Mammary epithelial cell (primary cell): ENCODE measurements at regions of chr12 and their contacts with region 1.

Region 1: GRCh38 chr12:47742253-47742825 is 16.3 kb downstream of the RAPGEF3 start:
- DNase-seq: no peak
- H3K4me3 ChIP-seq: no peak overlapping the region
- H3K27ac ChIP-seq: no peak overlapping the region
- H3K4me1 ChIP-seq: peaks cover 21% of the 10 kb centered on the region
- H3K27me3 ChIP-seq: no peaks in the 10 kb centered on the region
- CTCF ChIP-seq: peak; percentile 98 to 99

Region 2: GRCh38 chr12:47715393-47715876 is 26.9 kb before region 1 on chr12:
- CTCF ChIA-PET with region 1: no interaction called
- dilution Hi-C with region 1: no loop called
- in situ Hi-C with region 1: no loop called
- intact Hi-C with region 1: loop called (anchors 2 kb)
- DNase-seq: peak; percentile 77
- H3K4me3 ChIP-seq: peak overlapping the region in 1 of 3 experiments; percentile 9
- H3K27ac ChIP-seq: no peak overlapping the region
- H3K4me1 ChIP-seq: peaks cover 7% of the 10 kb centered on the region
- H3K27me3 ChIP-seq: no peaks in the 10 kb centered on the region
- CTCF ChIP-seq: peak; percentile 79 to 80

Region 3: DNA sequence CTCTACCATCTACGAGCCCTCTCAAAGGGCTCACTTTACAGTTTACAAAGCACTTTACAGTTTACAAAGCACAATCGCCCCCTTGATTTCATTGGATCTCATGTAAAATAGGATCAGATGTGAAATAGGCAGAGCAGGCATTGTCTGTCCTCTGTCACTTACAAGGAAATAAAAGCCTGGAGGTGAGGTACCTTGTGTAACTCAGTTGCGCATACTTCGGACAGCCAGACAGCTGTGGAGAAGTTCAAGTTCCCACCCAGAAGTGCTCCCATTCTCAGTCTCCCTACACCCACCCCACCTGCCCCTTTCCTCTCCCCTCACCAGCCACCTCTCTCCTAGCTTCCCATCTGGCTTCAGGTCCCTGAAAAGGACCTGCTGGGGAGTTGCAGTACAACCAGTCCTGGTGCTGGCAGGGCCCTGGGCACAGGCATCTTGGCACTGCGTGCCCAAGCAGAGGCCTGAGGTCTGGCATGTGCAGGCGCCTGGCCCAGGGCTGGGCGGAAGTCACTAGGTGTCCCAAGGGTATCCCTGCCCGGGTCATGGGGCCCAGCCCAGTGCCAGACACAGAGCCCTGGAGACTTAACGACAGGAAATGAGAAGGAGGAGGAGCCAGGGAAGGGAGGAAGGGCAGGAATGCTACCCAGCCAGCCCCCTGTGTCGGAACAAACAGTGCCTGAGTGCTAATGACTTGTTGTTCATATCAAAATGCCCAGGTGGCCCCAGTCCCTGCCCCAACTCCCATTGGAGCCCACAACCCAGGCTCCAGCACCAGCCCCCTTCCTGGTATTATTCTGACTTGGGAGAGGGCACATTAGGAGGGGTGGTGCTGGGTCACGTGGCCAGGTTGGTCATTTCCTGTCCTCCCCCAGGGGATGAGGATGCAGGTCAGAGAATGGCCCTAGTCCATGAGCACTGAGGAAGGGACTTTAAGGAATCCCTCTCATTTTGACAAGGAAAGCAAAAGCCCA is 11.0 kb after region 1 on chr12:
- CTCF ChIA-PET with region 1: interaction called, 3 read pairs
- dilution Hi-C with region 1: no loop called
- in situ Hi-C with region 1: no loop called
- intact Hi-C with region 1: loop called (anchors 1 kb)
- DNase-seq: peak; percentile 61
- H3K4me3 ChIP-seq: no peak overlapping the region
- H3K27ac ChIP-seq: peak overlapping the region; percentile 94
- H3K4me1 ChIP-seq: peaks cover 70% of the 10 kb centered on the region
- H3K27me3 ChIP-seq: no peaks in the 10 kb centered on the region
- CTCF ChIP-seq: no peak

Region 4: DNA sequence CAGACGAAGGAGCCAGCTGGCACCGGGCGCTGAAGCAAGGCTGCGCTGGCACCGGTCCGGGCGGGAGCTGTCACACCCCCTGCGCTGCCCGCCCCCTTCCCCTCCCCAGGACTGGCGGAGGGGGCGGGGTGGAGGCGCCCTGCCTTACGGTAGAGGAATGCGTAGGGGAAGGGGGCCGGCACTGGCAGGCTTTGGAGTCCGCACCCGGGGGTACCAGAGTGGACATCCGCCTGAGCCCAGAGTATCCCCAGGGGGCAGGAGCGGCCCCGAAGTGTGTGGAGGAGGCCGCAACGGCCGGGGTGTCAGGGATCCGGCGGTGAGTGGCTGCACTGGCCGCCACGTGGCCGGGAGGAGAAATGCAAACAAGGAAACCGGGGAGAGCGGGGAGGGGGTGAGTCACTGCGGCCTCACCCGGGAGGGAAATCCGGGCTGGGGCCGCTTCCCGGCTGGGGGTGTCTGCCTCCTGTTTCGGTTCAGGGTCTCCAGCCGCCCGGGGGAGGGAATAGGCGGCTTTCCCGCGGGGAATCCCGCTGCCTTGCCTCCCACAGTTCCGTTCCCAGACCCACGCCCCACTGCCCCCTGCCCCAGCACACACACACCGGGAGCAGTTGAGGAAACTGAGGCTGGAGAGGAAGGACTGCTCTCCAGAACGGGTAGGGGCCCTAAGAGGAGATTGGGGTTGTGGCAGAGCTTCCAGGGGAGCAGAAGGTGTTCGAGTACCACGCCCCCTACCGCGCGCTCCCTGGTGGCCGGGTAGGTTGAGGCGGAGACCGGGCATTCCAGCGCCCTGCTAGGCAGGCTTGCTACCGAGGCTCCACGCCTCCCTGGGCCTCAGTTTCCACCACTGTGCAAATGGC is 16.7 kb after region 1 on chr12 and contains the start of gene RAPGEF3:
- CTCF ChIA-PET with region 1: interaction called, 3 read pairs
- dilution Hi-C with region 1: no loop called
- in situ Hi-C with region 1: no loop called
- intact Hi-C with region 1: loop called (anchors 1 kb)
- DNase-seq: peak; percentile 85
- H3K4me3 ChIP-seq: peak within 1 kb of the TSS; percentile 50 to 69 (median 54)
- H3K27ac ChIP-seq: peak within 1 kb of the TSS; percentile 67
- H3K4me1 ChIP-seq: peaks cover 57% of the 10 kb centered on the region
- H3K27me3 ChIP-seq: no peaks in the 10 kb centered on the region
- CTCF ChIP-seq: peak; percentile 33 to 65
- total RNA-seq, gene RAPGEF3: 9.7 to 41.0 TPM

Region 5: DNA sequence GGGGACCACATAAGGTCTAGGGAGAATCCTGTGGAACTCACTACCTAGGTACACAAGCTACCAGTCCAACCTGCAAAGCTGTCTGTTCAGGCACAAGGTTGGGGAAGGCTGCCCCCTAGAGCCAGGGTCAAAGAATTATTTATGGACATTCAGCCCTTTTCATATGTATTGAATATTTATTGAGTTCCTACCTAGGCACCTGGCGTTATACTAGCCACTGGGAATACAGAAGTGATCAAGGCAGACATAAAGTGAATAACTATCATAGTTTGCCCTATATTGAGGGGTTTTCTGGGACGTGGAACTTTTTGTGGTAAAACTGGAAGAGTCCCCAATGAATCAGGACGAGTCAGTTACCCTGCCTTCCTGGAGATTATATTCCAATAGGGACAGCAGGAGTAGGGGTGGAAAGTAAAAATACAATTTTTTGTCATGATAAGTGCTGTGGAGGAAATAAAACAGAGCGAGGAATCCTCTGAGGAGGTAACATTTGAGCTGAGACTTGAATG is 24.9 kb after region 1 on chr12:
- CTCF ChIA-PET with region 1: interaction called, 20 read pairs
- dilution Hi-C with region 1: no loop called
- in situ Hi-C with region 1: no loop called
- intact Hi-C with region 1: loop called (anchors 1 kb)
- DNase-seq: no peak
- H3K4me3 ChIP-seq: no peak overlapping the region
- H3K27ac ChIP-seq: no peak overlapping the region
- H3K4me1 ChIP-seq: peaks cover 58% of the 10 kb centered on the region
- H3K27me3 ChIP-seq: no peaks in the 10 kb centered on the region
- CTCF ChIP-seq: peak; percentile 65 to 72

Region 6: DNA sequence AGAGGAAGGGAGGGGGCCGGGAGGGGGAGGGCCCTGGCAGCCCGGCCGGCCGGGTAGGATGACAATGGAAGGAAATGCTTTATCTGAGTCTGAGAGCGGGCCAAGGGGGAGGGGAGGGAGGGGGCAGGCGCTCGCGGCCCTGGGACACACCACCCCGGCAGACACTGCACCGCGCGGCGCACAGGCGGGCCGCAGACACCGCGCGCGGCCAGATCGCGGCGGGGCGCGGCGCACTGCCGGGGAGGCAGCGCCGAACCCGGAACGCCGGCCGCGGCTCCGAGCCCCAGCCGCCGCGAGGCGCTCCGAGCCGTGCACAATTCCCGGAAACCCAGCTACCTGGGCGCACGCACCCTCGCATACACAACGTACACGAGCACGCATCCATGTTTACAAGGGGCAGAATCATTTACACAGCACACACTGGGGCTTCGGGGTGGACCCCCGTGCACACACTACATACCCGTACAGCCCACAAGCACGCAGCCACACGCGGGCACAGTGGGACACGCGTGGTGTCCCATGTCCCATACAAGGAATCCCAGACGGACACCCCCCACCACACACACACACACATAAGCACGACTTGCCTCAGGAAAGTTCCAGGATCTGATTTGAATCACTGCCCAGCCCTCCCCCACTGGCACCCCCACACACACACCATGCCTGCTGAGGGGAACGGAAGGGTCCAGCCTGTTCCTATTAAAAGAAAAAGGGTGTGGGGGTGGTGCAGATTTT is 77.7 kb after region 1 on chr12 and contains the start of gene HDAC7:
- CTCF ChIA-PET with region 1: no interaction called
- dilution Hi-C with region 1: no loop called
- in situ Hi-C with region 1: no loop called
- intact Hi-C with region 1: loop called (anchors 5 kb)
- DNase-seq: peak; percentile 68
- H3K4me3 ChIP-seq: peak within 1 kb of the TSS; percentile 45 to 79 (median 71)
- H3K27ac ChIP-seq: peak within 1 kb of the TSS; percentile 78
- H3K4me1 ChIP-seq: peaks cover 48% of the 10 kb centered on the region
- H3K27me3 ChIP-seq: no peaks in the 10 kb centered on the region
- CTCF ChIP-seq: peak in 1 of 2 donors; percentile 14
- total RNA-seq, gene HDAC7: 17.7 to 72.1 TPM